ENCODE measurements at regions of chr9 and their contacts with region 1.

Region 1: DNA sequence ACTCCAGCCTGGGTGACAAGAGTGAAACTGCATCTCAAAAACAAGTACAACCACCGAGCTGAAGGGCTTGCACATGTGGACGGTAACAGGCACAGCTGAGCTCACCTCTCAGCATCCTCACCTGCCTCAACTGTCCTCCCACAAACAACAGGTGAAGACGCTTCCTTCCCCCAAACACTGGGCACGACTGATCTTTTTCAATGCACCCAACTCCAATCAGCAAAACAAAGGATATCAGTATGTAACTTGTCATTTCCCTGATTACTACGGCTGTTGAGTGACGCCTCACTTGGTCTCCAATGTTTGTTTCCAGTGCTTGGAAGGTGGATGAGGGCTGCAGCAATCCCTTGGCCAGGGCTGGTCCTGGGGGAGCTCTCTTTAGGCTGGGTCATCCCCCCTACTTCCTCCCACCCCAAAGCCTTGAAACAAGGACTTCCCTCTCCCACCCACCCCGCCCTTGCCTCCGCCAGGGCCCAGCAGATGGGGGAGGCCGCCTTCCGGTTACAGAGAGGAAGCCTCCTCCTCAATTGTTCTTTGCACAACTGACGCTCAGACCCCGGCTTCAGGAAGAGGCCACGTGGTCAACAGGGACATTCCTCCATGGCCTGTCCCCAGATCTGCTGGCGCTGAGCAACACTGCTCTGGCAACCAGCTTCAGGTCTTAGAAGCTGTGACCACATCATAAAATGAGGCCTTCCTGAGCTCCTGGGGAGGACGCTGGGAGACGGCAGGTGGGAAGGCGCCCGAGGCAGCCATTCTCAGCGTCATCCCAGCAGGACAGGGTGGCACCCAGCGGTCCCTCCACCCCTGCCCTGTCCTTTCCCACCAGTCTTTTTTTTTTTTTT is 5.9 kb downstream of the FAM78A start:
- DNase-seq: peak in 9 of 10 donors; percentile 34 to 66 (median 60)
- ATAC-seq: peak; percentile 4 to 23
- H3K4me3 Mint-ChIP-seq: peak overlapping the region; percentile 93 to 100 (median 99)
- H3K27ac Mint-ChIP-seq: peak overlapping the region; percentile 94 to 100 (median 99)
- H3K4me1 Mint-ChIP-seq: peaks cover 29 to 81% (median 56%) of the 10 kb centered on the region in 4 donors
- H3K27me3 Mint-ChIP-seq: no peaks in the 10 kb centered on the region

Region 2: DNA sequence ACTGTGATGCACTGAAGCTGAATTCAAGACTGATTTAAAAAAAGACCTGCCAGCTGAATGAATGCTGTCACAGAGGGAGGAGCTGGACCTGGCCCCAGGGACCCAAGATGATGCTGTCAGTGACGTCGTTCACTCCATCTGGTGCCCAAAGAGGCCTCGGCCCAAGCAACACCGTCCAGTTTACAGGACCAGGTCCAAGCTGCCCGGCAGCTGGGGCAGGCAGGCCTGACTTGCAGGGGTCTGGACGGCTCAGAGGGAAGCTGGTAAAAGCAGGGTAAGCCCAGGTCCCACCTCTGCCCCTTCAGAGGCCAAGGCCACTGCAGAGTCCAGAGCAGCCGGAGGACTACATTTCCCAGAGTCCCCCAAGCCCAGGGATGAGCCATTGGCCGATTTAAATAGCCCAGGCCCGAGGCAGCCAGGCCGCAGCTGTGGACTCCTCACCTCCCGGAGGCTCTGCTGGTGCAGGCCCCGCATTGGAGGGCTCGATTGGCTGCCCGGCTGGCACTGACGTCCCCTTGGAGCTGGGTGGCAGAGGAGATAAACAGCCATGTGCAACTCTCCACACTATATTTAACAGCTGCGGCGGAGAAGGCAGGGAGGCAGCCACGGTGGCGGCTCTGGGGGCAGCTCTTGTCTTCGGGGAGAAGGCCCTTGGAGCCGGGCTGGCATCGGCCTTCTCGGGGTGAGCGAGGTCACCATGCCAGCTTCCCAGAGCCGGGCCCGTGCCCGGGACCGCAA is 19.1 kb after region 1 on chr9 and contains the start of gene PLPP7:
- POLR2A ChIA-PET with region 1: interaction called, 1,403 read pairs
- DNase-seq: peak in 1 of 10 donors; percentile 57
- ATAC-seq: peak in 1 of 2 donors; percentile 41
- H3K4me3 Mint-ChIP-seq: peak within 1 kb of the TSS in 4 of 10 donors; percentile 6 to 51 (median 8)
- H3K27ac Mint-ChIP-seq: peak within 1 kb of the TSS in 1 of 10 donors; percentile 17
- H3K4me1 Mint-ChIP-seq: peaks cover 0 to 4% (median 2%) of the 10 kb centered on the region in 4 donors
- H3K27me3 Mint-ChIP-seq: no peaks in the 10 kb centered on the region
- polyA plus RNA-seq, gene PLPP7: 0.45 to 0.57 TPM in 2 of 3 donors, not detected in the other

Region 3: GRCh38 chr9:131302244-131303075 is 32.1 kb after region 1 on chr9:
- POLR2A ChIA-PET with region 1: no interaction called
- DNase-seq: peak in 1 of 10 donors; percentile 60
- ATAC-seq: no peak
- H3K4me3 Mint-ChIP-seq: no peak overlapping the region
- H3K27ac Mint-ChIP-seq: no peak overlapping the region
- H3K4me1 Mint-ChIP-seq: peaks cover 0 to 2% (median 0%) of the 10 kb centered on the region in 4 donors
- H3K27me3 Mint-ChIP-seq: no peaks in the 10 kb centered on the region